ENCODE measurements at regions of chr11 and their contacts with region 1.

Region 1: DNA sequence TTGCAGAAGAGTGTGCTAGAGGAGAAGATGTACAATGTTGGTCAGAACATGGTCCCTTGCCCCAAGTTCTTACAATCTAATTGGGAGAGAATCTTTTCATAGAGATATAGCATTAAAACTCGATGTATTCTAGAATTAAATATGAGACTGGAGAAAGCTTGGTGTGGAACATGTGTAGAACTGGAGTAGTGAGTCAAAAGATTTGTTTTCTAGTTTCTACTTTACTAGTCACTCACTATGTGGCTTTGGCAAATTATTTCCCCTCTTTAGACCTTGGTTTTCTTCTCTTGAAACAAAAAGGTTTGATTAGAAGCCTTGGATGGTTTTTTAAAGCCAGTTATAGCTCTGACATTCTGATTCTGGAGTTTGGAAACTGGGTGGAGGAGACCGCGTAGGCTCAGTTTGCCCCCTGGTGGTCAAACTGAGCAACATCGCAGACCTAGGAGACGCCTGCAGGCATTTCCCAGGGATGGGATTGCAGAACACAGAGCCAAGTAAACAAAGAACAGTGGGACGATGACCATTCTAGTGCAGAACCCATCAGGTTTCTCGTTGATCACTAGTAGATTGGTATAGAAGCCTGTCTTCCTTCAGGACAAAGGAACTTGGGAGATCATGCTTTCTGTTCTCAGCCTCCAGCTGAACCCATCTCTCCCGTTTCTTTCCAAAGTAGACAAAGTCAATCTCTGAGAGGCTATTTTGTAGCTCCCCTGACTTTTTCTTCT is 8.5 kb upstream of the CHRDL2 start:
- DNase-seq: peak; percentile 90
- ATAC-seq: peak; percentile 98
- H3K4me3 ChIP-seq: no peak overlapping the region
- H3K27ac ChIP-seq: no peak overlapping the region
- H3K4me1 ChIP-seq: no peaks in the 10 kb centered on the region
- H3K27me3 ChIP-seq: peaks cover 8% of the 10 kb centered on the region; the same call in 1 of the 2 replicates
- CTCF ChIP-seq: peak; percentile 98

Region 2: GRCh38 chr11:74570266-74571061 is 169.2 kb before region 1 on chr11:
- CTCF ChIA-PET with region 1: no interaction called
- POLR2A ChIA-PET with region 1: no interaction called
- intact Hi-C with region 1: no loop called
- DNase-seq: peak; percentile 85
- ATAC-seq: peak; percentile 86
- H3K4me3 ChIP-seq: no peak overlapping the region
- H3K27ac ChIP-seq: no peak overlapping the region
- H3K4me1 ChIP-seq: peaks cover 5% of the 10 kb centered on the region; the same call in 1 of the 2 replicates
- H3K27me3 ChIP-seq: no peaks in the 10 kb centered on the region
- CTCF ChIP-seq: peak; percentile 97

Region 3: GRCh38 chr11:74611369-74611861 is 128.3 kb before region 1 on chr11:
- CTCF ChIA-PET with region 1: no interaction called
- POLR2A ChIA-PET with region 1: no interaction called
- intact Hi-C with region 1: loop called (anchors 5 kb)
- DNase-seq: peak; percentile 68
- ATAC-seq: peak; percentile 56; the same call in 1 of the 2 replicates
- H3K4me3 ChIP-seq: no peak overlapping the region
- H3K27ac ChIP-seq: no peak overlapping the region
- H3K4me1 ChIP-seq: no peaks in the 10 kb centered on the region
- H3K27me3 ChIP-seq: no peaks in the 10 kb centered on the region
- CTCF ChIP-seq: peak; percentile 76

Region 4: DNA sequence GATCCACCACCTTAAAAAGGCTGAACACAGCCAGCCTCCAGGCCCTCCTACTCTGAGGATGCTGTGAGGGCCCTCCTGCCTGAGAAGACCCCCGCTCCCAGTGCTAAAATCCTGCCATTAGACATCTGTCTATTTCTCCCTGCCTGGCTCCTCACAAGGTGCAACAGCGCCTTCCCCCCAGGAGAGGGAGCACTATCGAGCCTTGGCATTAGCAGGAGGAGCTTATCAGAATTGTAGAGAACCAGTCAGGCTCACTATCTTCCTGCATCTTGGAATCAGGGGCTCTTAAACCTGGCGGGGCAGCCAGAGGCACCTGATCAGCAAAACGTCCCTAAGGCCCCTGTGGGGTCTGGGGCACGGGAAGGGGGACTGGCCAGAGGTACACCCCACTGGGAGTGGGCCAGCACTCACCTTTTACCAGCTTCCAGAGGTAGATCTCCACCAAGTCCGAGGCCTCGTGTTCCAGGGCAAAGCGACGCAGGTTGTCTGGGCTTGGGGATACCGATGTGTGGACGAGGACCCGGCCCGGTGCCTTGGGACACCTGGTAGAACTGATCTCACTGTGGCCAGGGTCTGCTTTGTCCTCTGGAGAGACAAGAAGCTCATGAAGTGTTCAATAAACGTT is 37.2 kb before region 1 on chr11:
- CTCF ChIA-PET with region 1: interaction called, 22 read pairs
- POLR2A ChIA-PET with region 1: interaction called, 3 read pairs
- intact Hi-C with region 1: no loop called
- DNase-seq: peak; percentile 84
- ATAC-seq: peak; percentile 85
- H3K4me3 ChIP-seq: no peak overlapping the region
- H3K27ac ChIP-seq: no peak overlapping the region
- H3K4me1 ChIP-seq: no peaks in the 10 kb centered on the region
- H3K27me3 ChIP-seq: no peaks in the 10 kb centered on the region
- CTCF ChIP-seq: peak; percentile 97

Measured in PC-3 (cell line).